Dendritic cell treated with granulocyte-macrophage colony-stimulating factor and Interleukin-4, amounts not matched to agents 40 ng/mL and 50 ng/mL, for 4 days (primary cell): ENCODE measurements at regions of chr15 and their contacts with region 1.

Region 1: DNA sequence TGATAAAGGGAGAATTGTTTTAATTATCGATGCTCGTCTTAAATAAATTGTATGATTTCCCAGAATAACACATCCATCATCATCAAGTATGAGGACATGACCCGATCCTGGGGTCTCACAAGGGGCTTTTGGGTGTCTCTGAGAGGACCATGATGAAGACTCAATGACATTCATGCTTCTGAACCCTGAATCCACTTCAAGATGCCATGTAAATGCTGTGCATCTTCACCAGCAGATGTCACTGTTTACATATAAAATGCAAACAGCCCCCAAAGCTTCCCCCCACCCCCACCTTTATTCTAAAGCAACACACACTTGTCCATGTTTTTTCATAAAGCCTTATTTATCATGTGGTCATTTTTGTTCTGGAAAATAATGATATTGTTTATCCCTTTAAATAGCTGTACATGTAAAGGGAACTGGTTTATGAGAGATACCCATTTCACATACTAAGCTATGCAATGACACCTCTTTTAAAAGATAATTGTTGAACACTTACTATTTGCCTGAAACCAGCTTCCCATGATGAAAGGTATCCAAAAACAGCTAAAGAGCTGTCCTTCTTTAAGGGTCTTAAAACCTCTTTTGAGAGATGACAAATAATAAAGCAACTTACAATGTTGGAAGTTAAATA is 69.7 kb upstream of the UBE3A start:
- H3K4me3 Mint-ChIP-seq: no peak overlapping the region
- H3K27ac Mint-ChIP-seq: no peak overlapping the region
- H3K4me1 Mint-ChIP-seq: no peaks in the 10 kb centered on the region
- H3K27me3 Mint-ChIP-seq: no peaks in the 10 kb centered on the region

Region 2: DNA sequence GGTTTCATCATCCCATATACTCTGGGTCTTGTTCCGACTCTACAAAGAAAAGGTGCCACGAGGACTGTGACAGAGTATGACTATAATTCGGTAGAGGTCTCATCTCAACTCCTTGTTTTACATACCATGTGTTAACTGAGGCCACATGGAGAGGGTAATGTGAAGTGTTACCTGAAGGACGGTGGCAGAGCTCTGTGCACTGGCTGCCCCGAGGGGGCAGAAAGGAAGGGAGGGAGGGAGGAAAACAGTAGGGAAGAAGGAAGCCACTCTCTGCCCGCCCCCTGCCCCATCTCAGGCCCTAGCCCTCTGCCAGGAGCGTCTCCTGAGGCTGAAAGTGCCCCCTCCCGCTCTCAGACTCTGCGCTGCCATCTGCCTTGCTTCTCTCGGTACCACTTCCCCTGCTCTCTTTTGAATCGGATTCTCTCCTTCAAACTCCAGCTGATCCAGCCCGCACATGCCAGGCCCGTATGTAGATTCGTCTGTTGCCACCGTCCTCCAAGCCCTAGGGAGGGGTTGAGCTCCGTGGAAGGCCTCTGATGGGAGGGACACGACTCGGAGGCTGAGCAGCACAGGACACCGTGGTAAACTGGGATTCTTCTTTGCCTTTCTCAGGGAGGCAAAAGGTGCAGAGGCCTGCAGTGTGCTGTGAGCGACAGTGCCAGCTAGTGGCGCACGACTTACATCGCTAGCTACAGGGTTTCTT is 425.1 kb after region 1 on chr15:
- intact Hi-C with region 1: loop called (anchors 5 kb)
- H3K4me3 Mint-ChIP-seq: peak overlapping the region; percentile 77
- H3K27ac Mint-ChIP-seq: peak overlapping the region; percentile 65
- H3K4me1 Mint-ChIP-seq: peaks cover 18% of the 10 kb centered on the region
- H3K27me3 Mint-ChIP-seq: peaks cover 30% of the 10 kb centered on the region

Region 3: DNA sequence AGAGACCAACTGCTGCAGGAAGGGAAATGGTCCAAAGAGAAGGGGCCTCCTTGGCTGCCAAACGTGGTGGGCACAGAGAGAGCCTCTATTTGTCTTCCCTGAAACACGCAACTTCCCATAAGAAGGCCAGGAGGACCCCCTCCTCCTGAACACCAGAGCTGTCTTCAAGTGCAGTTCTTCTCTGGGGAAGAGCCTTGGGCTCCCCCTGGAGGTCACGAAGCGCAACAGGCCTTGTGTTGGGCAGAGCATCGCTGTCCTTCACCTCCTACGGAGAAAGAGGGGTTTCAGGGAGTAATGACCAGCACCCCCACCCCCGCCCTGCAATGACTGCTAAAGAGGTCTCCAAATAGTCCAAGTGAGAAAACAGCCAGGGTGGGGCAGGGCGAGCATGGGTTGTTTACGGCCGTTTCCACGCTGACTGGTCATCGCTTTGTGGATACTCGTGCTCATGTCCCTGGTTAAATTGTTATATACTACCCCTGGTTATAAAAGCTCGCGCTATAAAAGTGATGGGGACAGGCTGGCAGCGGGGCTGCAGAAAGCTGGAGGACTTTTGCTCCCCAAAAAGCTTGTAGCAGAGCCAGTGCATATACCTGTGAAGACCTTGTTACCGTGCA is 752.1 kb after region 1 on chr15:
- intact Hi-C with region 1: loop called (anchors 2 kb)
- H3K4me3 Mint-ChIP-seq: no peak overlapping the region
- H3K27ac Mint-ChIP-seq: no peak overlapping the region
- H3K4me1 Mint-ChIP-seq: no peaks in the 10 kb centered on the region
- H3K27me3 Mint-ChIP-seq: no peaks in the 10 kb centered on the region